ENCODE measurements at regions of chr19 and their contacts with region 1.

Region 1: GRCh38 chr19:1269065-1269477 is at the start of gene CIRBP:
- DNase-seq: peak; percentile 100
- ATAC-seq: peak; percentile 69 to 85 (median 78)
- H3K4me3 ChIP-seq: peak within 1 kb of the TSS; percentile 5 to 92 (median 72)
- H3K27ac ChIP-seq: peak within 1 kb of the TSS; percentile 92 to 100 (median 98)
- H3K4me1 ChIP-seq: peaks cover 9 to 86% (median 81%) of the 10 kb centered on the region in 12 donors
- H3K27me3 ChIP-seq: no peaks in the 10 kb centered on the region
- CTCF ChIP-seq: peak in 2 of 12 donors; percentile 11 to 15
- POLR2A ChIP-seq: peak; percentile 99 to 100
- total RNA-seq, gene CIRBP: 149 to 425 (median 269) TPM

Region 2: GRCh38 chr19:1103708-1104310 is 165.3 kb before region 1 on chr19 and contains the start of gene GPX4:
- intact Hi-C with region 1: loop called in 1 of 10 experiments (anchors 5 kb)
- DNase-seq: peak; percentile 99 to 100 (median 100)
- ATAC-seq: peak; percentile 85 to 91 (median 90)
- H3K4me3 ChIP-seq: peak within 1 kb of the TSS; percentile 35 to 95 (median 76)
- H3K27ac ChIP-seq: peak within 1 kb of the TSS; percentile 79 to 100 (median 98)
- H3K4me1 ChIP-seq: peaks cover 0 to 74% (median 56%) of the 10 kb centered on the region in 12 donors
- H3K27me3 ChIP-seq: no peaks in the 10 kb centered on the region
- CTCF ChIP-seq: no peak
- POLR2A ChIP-seq: peak; percentile 40 to 96
- total RNA-seq, gene GPX4: 251 to 590 (median 289) TPM

Region 3: GRCh38 chr19:1249298-1249989 is 19.6 kb before region 1 on chr19:
- intact Hi-C with region 1: loop called (anchors 1 to 2 kb)
- DNase-seq: peak; percentile 92 to 96 (median 94)
- ATAC-seq: peak in 2 of 4 donors; percentile 5 to 6
- H3K4me3 ChIP-seq: peak overlapping the region; percentile 68 to 97 (median 85)
- H3K27ac ChIP-seq: peak overlapping the region; percentile 96 to 100 (median 100)
- H3K4me1 ChIP-seq: peaks cover 21 to 75% (median 57%) of the 10 kb centered on the region in 12 donors
- H3K27me3 ChIP-seq: no peaks in the 10 kb centered on the region
- CTCF ChIP-seq: no peak
- POLR2A ChIP-seq: peak; percentile 85 to 95

Measured in heart left ventricle (tissue), 16 donors.